Head of caudate nucleus (tissue), 42 donors: ENCODE measurements at regions of chr2 and their contacts with region 1.

Region 1: GRCh38 chr2:75710577-75711253 is at the start of gene GCFC2:
- DNase-seq: peak; percentile 81 to 96 (median 90)

Region 2: DNA sequence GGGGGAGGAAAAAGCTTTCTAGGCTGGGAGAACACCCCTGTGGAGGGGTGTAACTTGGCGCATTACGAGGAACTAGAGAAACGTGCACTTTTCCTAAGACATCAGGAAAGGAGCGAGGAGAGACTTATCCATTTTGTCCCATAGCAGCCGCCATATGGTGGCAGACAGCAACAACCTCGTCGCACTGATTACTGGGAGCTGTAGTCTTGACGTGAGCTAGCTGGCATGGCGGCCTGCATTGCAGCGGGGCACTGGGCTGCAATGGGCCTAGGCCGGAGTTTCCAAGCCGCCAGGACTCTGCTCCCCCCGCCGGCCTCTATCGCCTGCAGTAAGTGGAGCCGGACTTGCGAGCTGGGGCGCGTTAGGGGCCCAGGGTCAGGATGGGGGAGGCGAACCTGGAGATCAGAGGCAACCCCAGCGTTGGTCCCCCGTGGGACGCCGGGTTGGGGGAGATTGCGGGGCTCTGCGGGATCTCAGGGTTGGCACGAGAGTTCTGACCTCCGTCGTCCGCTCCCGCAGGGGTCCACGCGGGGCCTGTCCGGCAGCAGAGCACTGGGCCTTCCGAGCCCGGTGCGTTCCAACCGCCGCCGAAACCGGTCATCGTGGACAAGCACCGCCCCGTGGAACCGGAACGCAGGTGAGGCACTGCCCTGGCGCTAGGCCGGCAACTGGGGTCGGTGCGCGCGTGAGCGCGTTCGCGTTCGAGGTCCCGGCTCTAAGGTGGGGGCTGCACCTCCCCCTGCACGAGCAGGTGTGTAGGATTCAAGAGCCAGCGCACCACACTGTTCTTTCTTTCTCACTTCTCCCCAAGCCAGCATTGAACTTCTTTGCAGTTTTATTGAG is 63.9 kb before region 1 on chr2 and contains the start of gene MRPL19:
- intact Hi-C with region 1: loop called (anchors 5 kb)
- DNase-seq: peak; percentile 77 to 97 (median 92)